Activated T-helper 1 cell treated with anti-CD3 and anti-CD28 coated beads, Interleukin-12 subunit alpha, Interleukin-12 subunit beta, Interleukin-2, Interleukin-4 antibody, amounts not matched to agents 30 ng/mL and 10 ng/mL and 1 ng/mL, durations not matched to agents 14 hours and 24 hours and 36 hours (primary cell): ENCODE measurements at regions of chr19 and their contacts with region 1.

Region 1: GRCh38 chr19:35748106-35749020 is at the start of gene LIN37:
- DNase-seq: peak; percentile 99
- H3K4me3 Mint-ChIP-seq: peak within 1 kb of the TSS; percentile 97
- H3K27ac Mint-ChIP-seq: peak within 1 kb of the TSS; percentile 89
- H3K4me1 Mint-ChIP-seq: peaks cover 43% of the 10 kb centered on the region
- H3K27me3 Mint-ChIP-seq: peaks cover 2% of the 10 kb centered on the region
- total RNA-seq, gene LIN37: 9.3 and 9.8 TPM in 2 replicates

Region 2: DNA sequence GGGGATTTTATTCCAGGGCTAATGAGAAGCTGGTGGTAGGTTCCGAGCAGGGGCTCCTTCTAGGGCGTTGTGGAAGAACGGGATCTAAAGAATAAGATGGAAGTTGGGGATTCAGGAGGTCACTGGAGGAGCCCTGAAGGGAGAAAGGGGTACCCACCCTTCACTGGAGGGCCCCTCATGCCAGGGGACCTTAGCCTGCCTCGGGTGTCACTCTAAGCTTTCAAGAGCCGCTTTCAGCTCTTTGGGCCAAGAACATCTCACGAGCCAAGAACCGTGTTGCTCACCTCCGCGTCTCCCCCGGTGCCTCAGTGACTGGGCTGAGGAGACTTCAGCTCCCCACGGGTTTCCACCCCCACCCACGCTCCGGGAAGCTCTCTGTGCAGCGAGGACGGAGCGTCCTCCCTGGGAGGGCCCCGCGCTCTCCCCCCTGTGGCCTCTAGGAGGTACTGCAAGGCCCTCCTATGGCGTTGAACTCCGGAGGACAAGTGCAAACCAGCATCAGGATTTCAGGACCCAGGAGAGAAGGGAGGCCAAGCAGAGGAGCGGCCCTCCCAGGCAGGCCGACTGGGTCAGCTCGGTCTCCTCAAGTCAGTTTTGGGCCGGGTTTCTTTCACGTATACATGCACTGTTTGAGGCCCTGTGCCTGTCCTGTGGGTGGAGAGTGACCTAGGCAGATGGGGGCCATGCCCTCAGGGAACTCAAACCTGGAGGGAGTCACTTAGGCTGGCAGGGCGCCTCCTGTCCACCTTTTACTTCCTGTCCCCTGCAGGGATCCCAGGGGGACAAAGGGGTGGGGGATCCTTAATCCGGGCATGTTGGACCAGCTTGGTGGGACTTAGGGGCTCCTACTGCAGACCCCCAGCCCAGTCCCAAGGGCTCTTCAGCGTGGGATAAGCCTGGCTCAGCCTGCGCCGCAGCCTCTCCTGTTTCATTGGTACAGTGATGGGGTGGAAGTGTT is 253.0 kb before region 1 on chr19:
- intact Hi-C with region 1: no loop called
- DNase-seq: peak; percentile 47
- H3K4me3 Mint-ChIP-seq: no peak overlapping the region
- H3K27ac Mint-ChIP-seq: no peak overlapping the region
- H3K4me1 Mint-ChIP-seq: peaks cover 11% of the 10 kb centered on the region
- H3K27me3 Mint-ChIP-seq: peaks cover 11% of the 10 kb centered on the region

Region 3: DNA sequence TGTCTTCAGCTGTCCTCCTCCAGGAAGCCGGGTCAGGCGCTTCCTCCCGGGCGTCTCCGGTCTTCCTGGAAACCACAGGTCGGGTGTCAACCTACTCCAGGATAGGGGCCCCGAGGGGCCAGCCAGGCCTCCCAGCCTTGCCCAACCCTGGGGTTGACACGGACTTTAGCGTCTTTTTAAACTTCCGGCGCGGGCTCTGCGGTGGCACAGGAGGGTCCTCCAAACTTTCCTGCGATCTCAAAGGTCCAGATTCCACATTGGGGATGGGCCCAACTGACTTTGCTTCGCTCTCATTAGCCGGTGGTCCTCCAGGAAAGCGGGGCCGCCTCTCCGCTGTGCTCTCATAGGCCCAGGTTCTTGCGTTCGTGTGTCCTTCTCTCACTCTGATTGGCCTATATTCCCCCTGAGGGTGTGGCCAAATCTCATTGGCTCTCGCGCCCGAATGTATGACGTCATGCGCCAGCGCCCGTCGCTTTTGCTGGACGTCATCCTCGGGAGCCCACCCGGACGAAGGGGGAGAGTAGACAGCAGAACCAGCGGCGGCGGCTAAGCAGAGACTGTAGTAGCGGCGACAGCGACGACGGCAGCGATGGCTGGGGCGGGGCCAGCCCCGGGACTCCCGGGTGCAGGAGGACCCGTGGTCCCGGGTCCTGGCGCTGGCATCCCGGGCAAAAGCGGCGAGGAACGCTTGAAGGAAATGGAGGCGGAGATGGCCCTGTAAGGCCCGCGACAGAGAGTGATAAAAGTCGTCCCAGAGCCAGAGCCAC is 119.6 kb before region 1 on chr19 and contains the start of gene RBM42:
- intact Hi-C with region 1: loop called (anchors 1 kb)
- DNase-seq: peak; percentile 96
- H3K4me3 Mint-ChIP-seq: peak within 1 kb of the TSS; percentile 100
- H3K27ac Mint-ChIP-seq: peak within 1 kb of the TSS; percentile 100
- H3K4me1 Mint-ChIP-seq: peaks cover 12% of the 10 kb centered on the region
- H3K27me3 Mint-ChIP-seq: no peaks in the 10 kb centered on the region
- total RNA-seq, gene RBM42: 105 and 118 TPM in 2 replicates

Region 4: GRCh38 chr19:35702223-35703012 is 45.9 kb before region 1 on chr19:
- intact Hi-C with region 1: loop called (anchors 1 kb)
- DNase-seq: peak; percentile 93
- H3K4me3 Mint-ChIP-seq: peak overlapping the region; percentile 95
- H3K27ac Mint-ChIP-seq: peak overlapping the region; percentile 97
- H3K4me1 Mint-ChIP-seq: peaks cover 18% of the 10 kb centered on the region
- H3K27me3 Mint-ChIP-seq: no peaks in the 10 kb centered on the region

Region 5: GRCh38 chr19:35931161-35931873 is 183.0 kb after region 1 on chr19:
- intact Hi-C with region 1: loop called (anchors 1 kb)
- DNase-seq: peak; percentile 100
- H3K4me3 Mint-ChIP-seq: peak overlapping the region; percentile 70
- H3K27ac Mint-ChIP-seq: peak overlapping the region; percentile 81
- H3K4me1 Mint-ChIP-seq: peaks cover 30% of the 10 kb centered on the region
- H3K27me3 Mint-ChIP-seq: no peaks in the 10 kb centered on the region

Region 6: GRCh38 chr19:36114763-36115452 is 366.5 kb after region 1 on chr19 and contains the start of gene POLR2I:
- intact Hi-C with region 1: loop called (anchors 1 kb)
- DNase-seq: peak; percentile 98
- H3K4me3 Mint-ChIP-seq: peak within 1 kb of the TSS; percentile 98
- H3K27ac Mint-ChIP-seq: peak within 1 kb of the TSS; percentile 92
- H3K4me1 Mint-ChIP-seq: peaks cover 38% of the 10 kb centered on the region
- H3K27me3 Mint-ChIP-seq: peaks cover 1% of the 10 kb centered on the region
- total RNA-seq, gene POLR2I: 76.3 and 92.4 TPM in 2 replicates